MCF 10A (cell line): ENCODE measurements at regions of chr6 and their contacts with region 1.

Region 1: DNA sequence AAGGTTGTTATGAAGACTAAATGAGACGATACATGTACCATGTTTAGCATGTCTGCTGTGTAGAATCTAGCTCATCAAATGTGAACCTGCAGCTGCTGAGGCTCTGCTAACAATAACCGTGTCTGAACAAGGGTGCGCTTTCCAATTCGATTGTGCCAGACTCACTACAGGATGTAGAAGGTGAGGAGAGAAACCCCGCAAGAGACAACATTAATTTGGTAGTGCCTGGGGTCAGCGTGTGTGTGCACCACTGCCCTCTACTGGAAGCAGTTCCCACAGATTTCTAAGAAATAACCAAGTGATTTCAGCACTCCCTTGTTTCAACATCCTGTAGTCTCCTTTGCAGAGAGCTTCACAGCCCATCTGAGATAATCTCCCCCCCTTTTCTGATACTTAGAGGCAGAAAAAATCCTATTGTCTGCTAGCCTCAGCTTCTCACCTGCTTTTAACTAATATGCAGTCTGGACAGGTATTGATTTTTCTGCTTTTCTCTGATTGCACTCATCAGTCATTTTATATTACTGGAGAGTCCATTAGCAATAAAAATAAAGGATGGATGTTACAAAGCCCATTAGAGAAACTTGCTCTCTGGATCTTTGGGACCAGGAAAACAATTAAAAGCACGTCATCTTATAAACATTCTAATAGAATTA is 96.7 kb upstream of the BACH2 start:
- DNase-seq: peak; percentile 72
- H3K4me3 Mint-ChIP-seq: no peak overlapping the region
- H3K27ac Mint-ChIP-seq: no peak overlapping the region
- H3K4me1 Mint-ChIP-seq: peaks cover 10% of the 10 kb centered on the region
- H3K27me3 Mint-ChIP-seq: no peaks in the 10 kb centered on the region
- CTCF ChIP-seq: peak; percentile 68

Region 2: DNA sequence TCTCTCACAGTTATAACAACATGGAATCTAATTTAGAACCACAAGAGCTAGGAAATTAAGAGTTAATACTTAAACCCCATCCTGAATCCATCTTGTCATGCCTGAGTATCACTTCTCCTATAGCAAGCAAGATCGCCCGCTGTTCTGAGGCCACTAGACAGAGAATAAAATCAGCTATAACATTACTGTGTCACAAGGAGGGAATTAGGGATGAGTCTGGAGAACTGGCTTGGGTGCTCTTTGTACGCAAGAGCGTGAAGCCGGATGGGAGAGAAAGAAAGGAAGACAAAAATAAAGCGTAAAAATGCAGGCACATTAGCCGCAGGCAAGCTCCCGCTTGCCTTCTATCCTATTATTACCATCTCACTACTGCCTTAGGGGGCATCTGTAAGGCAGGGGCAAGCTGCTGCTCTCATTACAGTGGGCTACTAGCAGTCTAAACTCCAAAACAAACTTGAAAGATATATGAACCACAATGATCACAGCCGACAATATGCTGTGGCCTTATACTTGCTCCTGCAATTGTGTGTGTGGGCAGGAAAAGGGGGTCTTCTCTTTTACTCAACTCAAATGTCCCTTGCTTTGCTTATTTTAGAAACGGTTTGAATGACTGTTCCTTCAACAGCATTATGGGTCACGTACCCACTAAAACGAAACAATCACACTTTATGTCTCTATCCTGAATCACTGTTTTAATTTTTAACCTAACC is 417.2 kb before region 1 on chr6:
- CTCF ChIA-PET with region 1: interaction called, 22 read pairs
- POLR2A ChIA-PET with region 1: no interaction called
- intact Hi-C with region 1: no loop called
- DNase-seq: no peak
- H3K4me3 Mint-ChIP-seq: no peak overlapping the region
- H3K27ac Mint-ChIP-seq: no peak overlapping the region
- H3K4me1 Mint-ChIP-seq: no peaks in the 10 kb centered on the region
- H3K27me3 Mint-ChIP-seq: no peaks in the 10 kb centered on the region
- CTCF ChIP-seq: no peak

Region 3: DNA sequence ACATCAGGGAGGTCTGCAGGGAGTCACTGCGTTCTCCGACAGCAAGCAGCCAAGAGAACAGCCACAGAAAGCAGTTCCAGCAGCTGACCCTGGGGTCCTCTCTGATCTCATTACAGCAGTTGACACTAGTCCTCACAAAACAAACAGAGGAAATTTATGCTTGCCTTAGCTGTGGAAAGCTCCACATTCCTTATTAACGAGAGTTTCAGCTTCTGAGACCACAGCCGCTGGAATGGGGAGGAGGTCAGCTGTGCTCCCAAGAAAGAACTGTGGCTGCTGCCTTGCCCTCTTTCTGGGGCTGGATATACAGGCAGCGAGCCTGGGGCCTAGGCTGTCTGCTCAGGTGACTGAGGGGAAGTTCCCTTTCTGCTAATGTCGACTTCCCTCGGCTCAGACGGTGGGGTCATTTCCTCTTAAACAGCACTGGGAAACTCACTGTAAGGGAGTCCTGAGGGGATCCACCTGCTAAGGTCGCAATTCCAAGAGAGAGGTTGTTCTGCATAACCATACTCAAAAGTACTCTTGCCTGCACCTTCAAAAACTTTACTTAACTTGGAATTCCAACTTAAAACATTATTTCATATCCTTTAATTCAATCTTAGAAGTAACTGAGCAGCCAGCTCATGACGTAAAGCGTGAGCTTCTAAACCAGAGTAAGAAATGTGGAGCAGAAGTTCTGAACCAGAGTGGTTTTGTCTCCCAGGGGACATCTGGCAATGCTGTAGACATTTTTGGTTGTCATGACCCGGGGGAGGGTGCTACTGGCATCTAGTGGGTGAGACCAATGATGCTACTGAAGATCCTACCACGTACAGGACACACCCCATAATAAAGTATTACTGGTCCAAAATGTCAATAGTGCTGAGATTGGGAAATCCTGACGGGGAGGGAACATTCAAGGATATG is 177.0 kb before region 1 on chr6:
- CTCF ChIA-PET with region 1: interaction called, 13 read pairs
- POLR2A ChIA-PET with region 1: no interaction called
- intact Hi-C with region 1: no loop called
- DNase-seq: peak; percentile 24
- H3K4me3 Mint-ChIP-seq: no peak overlapping the region
- H3K27ac Mint-ChIP-seq: no peak overlapping the region
- H3K4me1 Mint-ChIP-seq: no peaks in the 10 kb centered on the region
- H3K27me3 Mint-ChIP-seq: no peaks in the 10 kb centered on the region
- CTCF ChIP-seq: no peak

Region 4: DNA sequence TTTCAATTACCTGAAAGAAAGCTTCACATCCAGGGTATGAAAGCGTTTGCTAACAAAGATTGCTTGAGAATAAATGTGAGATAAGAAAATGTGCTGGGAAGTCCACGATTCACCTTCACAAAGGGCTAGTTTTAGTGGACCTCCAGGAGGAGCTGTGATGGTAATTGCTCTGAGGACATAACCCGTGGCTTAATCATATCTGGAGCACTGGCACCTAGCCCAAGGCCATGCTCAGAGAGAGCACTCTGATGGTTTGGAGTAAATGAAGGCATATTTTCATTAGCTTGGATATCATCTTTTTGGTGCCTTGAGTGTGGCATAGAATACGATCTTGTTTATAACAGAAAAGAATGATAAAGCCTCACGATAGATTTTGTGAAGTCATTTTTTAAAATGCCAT is 49.8 kb before region 1 on chr6:
- CTCF ChIA-PET with region 1: interaction called, 7 read pairs
- POLR2A ChIA-PET with region 1: no interaction called
- intact Hi-C with region 1: loop called (anchors 2 kb)
- DNase-seq: peak; percentile 53
- H3K4me3 Mint-ChIP-seq: no peak overlapping the region
- H3K27ac Mint-ChIP-seq: no peak overlapping the region
- H3K4me1 Mint-ChIP-seq: peaks cover 12% of the 10 kb centered on the region
- H3K27me3 Mint-ChIP-seq: no peaks in the 10 kb centered on the region
- CTCF ChIP-seq: no peak

Region 5: DNA sequence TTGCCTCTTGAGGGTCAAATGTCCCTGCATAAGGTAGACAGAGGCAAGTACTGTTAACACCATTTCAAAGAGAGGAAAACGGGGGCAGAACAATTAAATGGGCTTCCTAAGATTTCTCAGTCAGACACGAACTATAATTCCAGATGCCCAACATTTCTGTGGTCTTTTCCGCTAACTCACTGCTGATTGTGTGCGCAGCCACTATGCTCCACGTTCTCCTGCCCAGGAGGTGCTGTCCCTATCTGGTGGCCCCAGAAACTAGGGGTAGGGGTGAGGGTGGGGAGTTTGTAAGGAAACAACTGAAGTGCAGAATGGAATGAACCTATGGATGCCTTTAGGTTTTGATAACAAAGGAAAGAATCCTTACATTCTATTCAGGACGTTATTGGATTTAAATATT is 10.6 kb before region 1 on chr6:
- CTCF ChIA-PET with region 1: interaction called, 44 read pairs
- POLR2A ChIA-PET with region 1: no interaction called
- intact Hi-C with region 1: no loop called
- DNase-seq: no peak
- H3K4me3 Mint-ChIP-seq: no peak overlapping the region
- H3K27ac Mint-ChIP-seq: no peak overlapping the region
- H3K4me1 Mint-ChIP-seq: no peaks in the 10 kb centered on the region
- H3K27me3 Mint-ChIP-seq: no peaks in the 10 kb centered on the region
- CTCF ChIP-seq: no peak

Region 6: GRCh38 chr6:90478789-90479602 is 85.6 kb after region 1 on chr6:
- CTCF ChIA-PET with region 1: interaction called, 25 read pairs
- POLR2A ChIA-PET with region 1: interaction called, 4 read pairs
- intact Hi-C with region 1: loop called (anchors 2 kb)
- DNase-seq: peak; percentile 96
- H3K4me3 Mint-ChIP-seq: no peak overlapping the region
- H3K27ac Mint-ChIP-seq: peak overlapping the region; percentile 32
- H3K4me1 Mint-ChIP-seq: peaks cover 18% of the 10 kb centered on the region
- H3K27me3 Mint-ChIP-seq: no peaks in the 10 kb centered on the region
- CTCF ChIP-seq: peak; percentile 71

Region 7: GRCh38 chr6:90677440-90677839 is 284.1 kb after region 1 on chr6:
- CTCF ChIA-PET with region 1: no interaction called
- POLR2A ChIA-PET with region 1: no interaction called
- intact Hi-C with region 1: no loop called
- DNase-seq: no peak
- H3K4me3 Mint-ChIP-seq: no peak overlapping the region
- H3K27ac Mint-ChIP-seq: no peak overlapping the region
- H3K4me1 Mint-ChIP-seq: no peaks in the 10 kb centered on the region
- H3K27me3 Mint-ChIP-seq: peaks cover 63% of the 10 kb centered on the region
- CTCF ChIP-seq: no peak

Region 8: DNA sequence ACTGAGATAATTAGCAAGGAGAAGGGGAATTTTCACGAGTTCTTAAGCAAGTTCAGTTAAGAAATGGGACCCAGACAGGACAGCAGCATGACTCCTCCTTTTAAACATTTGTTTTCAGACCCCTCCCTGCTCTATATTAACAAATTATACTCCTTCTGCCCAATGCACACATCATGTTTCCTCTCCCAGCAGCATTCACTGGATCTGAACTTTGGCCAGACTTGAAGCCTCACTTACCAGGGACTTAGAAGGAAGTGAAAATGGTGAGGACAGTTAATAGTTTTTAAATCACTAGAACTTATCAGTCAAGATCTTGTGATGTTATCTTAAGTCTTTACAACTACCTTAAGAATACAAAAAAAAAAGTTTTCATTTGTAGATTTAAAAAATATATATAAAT is 1368.3 kb after region 1 on chr6:
- CTCF ChIA-PET with region 1: no interaction called
- POLR2A ChIA-PET with region 1: no interaction called
- intact Hi-C with region 1: no loop called
- DNase-seq: no peak
- H3K4me3 Mint-ChIP-seq: no peak overlapping the region
- H3K27ac Mint-ChIP-seq: no peak overlapping the region
- H3K4me1 Mint-ChIP-seq: no peaks in the 10 kb centered on the region
- H3K27me3 Mint-ChIP-seq: no peaks in the 10 kb centered on the region
- CTCF ChIP-seq: no peak